ENCODE measurements at regions of chr3 and their contacts with region 1.

Region 1: GRCh38 chr3:128969993-128970739 is 23.7 kb downstream of the CFAP92 start:
- DNase-seq: peak; percentile 31
- H3K27ac ChIP-seq: no peak overlapping the region
- CTCF ChIP-seq: peak; percentile 94

Region 2: DNA sequence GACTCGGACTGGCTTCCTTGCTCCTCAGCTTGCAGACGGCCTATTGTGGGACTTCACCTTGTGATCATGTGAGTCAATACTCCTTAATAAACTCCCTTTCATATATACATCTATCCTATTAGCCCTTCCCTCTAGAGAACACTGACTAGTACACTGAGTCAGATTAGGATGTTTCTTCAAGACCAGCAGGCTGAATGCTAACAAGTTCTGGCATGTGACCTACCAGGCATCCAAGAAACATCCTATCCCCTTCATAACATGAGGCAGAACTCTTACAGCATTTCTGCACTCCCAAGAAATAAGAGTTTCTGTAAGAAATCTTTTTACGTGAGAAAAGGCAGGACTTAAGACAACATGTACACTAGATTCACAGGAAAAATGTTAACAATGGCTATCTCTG is 14.4 kb after region 1 on chr3:
- CTCF ChIA-PET with region 1: interaction called, 16 read pairs
- POLR2A ChIA-PET with region 1: no interaction called
- DNase-seq: peak; percentile 87
- H3K27ac ChIP-seq: peak overlapping the region; percentile 62
- CTCF ChIP-seq: no peak

Region 3: DNA sequence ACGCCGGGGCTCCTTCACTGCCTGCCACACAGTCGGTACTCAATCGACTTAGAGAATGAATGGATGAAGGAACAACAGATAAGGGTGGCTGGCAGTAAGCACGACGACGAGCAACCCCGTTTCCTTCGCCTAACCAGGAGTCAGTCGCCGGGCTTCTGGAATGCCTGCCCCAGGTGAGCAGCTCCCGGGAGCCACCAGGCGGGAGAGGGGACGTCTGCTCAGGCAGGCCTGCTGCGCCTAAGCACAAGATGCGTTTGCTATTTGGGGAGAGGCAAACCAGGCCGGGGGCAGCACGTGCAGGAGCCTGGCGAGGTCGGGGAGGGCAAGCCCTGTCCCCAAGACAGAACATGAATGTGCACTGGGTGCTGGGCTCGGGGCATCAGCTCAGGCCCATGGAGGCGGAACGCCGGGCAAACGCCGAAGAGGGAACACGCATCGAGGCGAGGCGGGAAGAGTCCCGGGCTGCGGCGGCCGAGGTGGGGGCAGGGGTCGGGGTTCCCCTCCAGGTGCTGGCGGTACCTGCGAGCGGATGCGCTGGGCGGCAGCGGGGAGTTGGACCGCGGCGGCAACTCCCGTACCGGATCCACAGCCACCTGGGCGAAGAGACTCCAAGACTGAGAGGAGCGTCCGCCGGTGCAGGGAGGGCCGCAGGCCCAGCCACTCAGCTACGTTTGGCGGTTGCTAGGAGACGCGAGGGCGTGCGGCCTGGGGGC is 23.5 kb after region 1 on chr3 and contains the start of gene CFAP92:
- CTCF ChIA-PET with region 1: interaction called, 14 read pairs
- POLR2A ChIA-PET with region 1: no interaction called
- DNase-seq: peak; percentile 90
- H3K27ac ChIP-seq: no peak within 1 kb of the TSS
- CTCF ChIP-seq: no peak

Region 4: GRCh38 chr3:129016356-129016719 is 46.2 kb after region 1 on chr3:
- CTCF ChIA-PET with region 1: interaction called, 21 read pairs
- POLR2A ChIA-PET with region 1: no interaction called
- DNase-seq: no peak
- H3K27ac ChIP-seq: no peak overlapping the region
- CTCF ChIP-seq: no peak

Measured in RWPE1 (cell line).